ENCODE measurements at regions of chr9 and their contacts with region 1.

Region 1: DNA sequence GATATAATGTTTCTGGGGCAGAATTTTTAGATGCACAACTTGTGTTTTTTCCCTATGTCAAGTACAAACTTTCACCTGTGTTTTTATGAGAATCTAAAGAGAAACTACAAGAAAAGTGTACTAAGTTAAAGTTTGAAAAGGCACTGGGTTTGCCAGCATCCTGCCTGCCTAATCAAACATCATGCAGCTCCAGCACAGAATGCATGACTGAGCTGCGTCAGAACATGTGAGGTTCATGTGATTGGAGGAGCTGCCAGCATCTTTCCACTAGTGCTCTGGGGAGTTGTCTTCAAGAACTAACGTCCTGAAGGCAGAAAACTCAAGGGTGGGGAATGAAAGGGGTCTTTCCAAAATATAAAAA is 46.1 kb upstream of the RIC1 start:
- DNase-seq: peak in 4 of 5 donors; percentile 42 to 63 (median 52)
- H3K4me3 ChIP-seq: no peak overlapping the region
- H3K4me3 Mint-ChIP-seq: peak overlapping the region in 3 of 8 donors; percentile 7 to 48 (median 13)
- H3K27ac ChIP-seq: no peak overlapping the region
- H3K27ac Mint-ChIP-seq: peak overlapping the region; percentile 49 to 92 (median 88)
- H3K4me1 ChIP-seq: peaks cover 35% of the 10 kb centered on the region
- H3K4me1 Mint-ChIP-seq: peaks cover 43 to 64% (median 44%) of the 10 kb centered on the region in 4 donors
- H3K27me3 ChIP-seq: no peaks in the 10 kb centered on the region
- H3K27me3 Mint-ChIP-seq: no peaks in the 10 kb centered on the region

Region 2: DNA sequence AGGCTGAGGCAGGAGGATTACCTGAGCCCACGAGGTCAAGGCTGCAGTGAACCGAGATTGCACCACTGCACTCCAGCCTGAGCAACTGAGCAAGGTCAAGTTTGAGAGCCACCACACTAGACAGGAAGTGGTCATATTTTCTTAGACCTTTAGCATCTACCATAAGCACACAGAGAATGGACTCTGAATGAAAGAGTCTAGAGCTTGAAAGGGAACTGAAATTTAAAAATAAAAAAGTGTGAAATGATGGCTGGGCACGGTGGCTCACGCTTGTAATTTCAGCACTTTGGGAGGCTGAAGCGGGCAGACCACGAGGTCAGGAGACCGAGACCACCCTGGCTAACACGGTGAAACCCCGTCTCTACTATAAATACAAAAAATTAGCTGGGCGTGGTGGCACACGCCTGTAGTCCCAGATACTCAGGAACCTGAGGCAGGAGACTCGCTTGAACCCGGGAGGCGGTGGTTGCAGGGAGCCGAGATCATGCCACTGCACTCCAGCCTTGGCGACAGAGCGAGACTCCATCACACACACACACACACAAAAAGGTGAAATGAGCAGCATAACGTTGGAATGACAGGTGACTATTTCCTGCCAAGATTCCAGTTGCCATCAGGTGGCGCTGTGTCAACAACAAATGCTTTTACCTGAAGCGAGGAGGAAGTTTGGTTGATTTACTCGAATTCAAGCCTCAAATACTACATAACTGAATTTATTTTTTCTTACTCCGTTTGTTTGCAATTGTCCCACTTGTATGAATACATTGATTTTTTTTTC is 820.5 kb before region 1 on chr9:
- CTCF ChIA-PET with region 1: no interaction called
- POLR2A ChIA-PET with region 1: no interaction called
- intact Hi-C with region 1: loop called (anchors 5 kb)
- DNase-seq: peak; percentile 75 to 79 (median 77)
- H3K4me3 ChIP-seq: no peak overlapping the region
- H3K4me3 Mint-ChIP-seq: peak overlapping the region in 6 of 8 donors; percentile 17 to 54 (median 42)
- H3K27ac ChIP-seq: no peak overlapping the region
- H3K27ac Mint-ChIP-seq: peak overlapping the region in 2 of 7 donors; percentile 28 to 71
- H3K4me1 ChIP-seq: peaks cover 11% of the 10 kb centered on the region
- H3K4me1 Mint-ChIP-seq: peaks cover 5 to 12% (median 6%) of the 10 kb centered on the region in 4 donors
- H3K27me3 ChIP-seq: peaks cover 4% of the 10 kb centered on the region
- H3K27me3 Mint-ChIP-seq: peaks cover 0 to 4% of the 10 kb centered on the region in 2 donors

Region 3: DNA sequence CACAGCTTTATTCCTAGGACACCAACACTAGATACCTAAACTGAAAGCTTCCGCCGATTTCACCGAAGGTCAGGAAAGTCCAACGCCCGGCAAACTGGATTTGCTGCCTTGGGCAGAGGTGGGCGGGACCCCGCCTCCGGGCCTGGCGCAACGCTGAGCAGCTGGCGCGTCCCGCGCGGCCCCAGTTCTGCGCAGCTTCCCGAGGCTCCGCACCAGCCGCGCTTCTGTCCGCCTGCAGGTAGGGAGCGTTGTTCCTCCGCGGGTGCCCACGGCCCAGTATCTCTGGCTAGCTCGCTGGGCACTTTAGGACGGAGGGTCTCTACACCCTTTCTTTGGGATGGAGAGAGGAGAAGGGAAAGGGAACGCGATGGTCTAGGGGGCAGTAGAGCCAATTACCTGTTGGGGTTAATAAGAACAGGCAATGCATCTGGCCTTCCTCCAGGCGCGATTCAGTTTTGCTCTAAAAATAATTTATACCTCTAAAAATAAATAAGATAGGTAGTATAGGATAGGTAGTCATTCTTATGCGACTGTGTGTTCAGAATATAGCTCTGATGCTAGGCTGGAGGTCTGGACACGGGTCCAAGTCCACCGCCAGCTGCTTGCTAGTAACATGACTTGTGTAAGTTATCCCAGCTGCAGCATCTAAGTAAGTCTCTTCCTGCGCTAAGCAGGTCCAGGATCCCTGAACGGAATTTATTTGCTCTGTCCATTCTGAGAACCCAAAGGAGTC is 132.3 kb before region 1 on chr9 and contains the start of gene CD274:
- CTCF ChIA-PET with region 1: interaction called, 236 read pairs
- POLR2A ChIA-PET with region 1: interaction called, 178 read pairs
- intact Hi-C with region 1: loop called (anchors 1 kb)
- DNase-seq: peak; percentile 78 to 82 (median 80)
- H3K4me3 ChIP-seq: peak within 1 kb of the TSS; percentile 65 to 67
- H3K4me3 Mint-ChIP-seq: peak within 1 kb of the TSS; percentile 87 to 96 (median 94)
- H3K27ac ChIP-seq: peak within 1 kb of the TSS; percentile 97
- H3K27ac Mint-ChIP-seq: peak within 1 kb of the TSS; percentile 92 to 99 (median 95)
- H3K4me1 ChIP-seq: peaks cover 77% of the 10 kb centered on the region
- H3K4me1 Mint-ChIP-seq: peaks cover 50 to 89% (median 62%) of the 10 kb centered on the region in 4 donors
- H3K27me3 ChIP-seq: no peaks in the 10 kb centered on the region
- H3K27me3 Mint-ChIP-seq: no peaks in the 10 kb centered on the region
- total RNA-seq, gene CD274: 16.2 to 23.0 TPM

Region 4: DNA sequence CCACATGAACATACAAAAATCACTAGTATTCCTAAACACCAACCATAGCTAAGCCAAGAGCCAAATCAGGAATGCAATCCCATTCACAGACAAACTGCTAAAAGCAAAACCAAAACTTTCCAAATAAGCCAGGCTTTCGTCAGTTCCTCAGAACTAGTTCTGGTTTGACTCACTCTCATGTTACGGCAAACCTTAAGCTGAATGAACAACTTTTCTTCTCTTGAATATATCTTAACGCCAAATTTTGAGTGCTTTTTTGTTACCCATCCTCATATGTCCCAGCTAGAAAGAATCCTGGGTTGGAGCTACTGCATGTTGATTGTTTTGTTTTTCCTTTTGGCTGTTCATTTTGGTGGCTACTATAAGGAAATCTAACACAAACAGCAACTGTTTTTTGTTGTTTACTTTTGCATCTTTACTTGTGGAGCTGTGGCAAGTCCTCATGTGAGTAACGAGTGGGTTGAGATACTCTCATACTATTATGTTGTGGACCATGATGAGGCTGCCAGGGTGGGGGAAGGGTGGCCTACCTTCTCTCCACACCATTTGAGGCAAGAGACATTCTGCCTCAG is 72.4 kb before region 1 on chr9 and contains the start of gene PDCD1LG2:
- CTCF ChIA-PET with region 1: interaction called, 5 read pairs
- POLR2A ChIA-PET with region 1: interaction called, 8 read pairs
- intact Hi-C with region 1: loop called (anchors 5 kb)
- DNase-seq: peak in 2 of 5 donors; percentile 9 to 10
- H3K4me3 ChIP-seq: peak within 1 kb of the TSS in 1 of 2 donors; percentile 16
- H3K4me3 Mint-ChIP-seq: peak within 1 kb of the TSS; percentile 82 to 90 (median 86)
- H3K27ac ChIP-seq: peak within 1 kb of the TSS; percentile 47
- H3K27ac Mint-ChIP-seq: peak within 1 kb of the TSS; percentile 80 to 95 (median 94)
- H3K4me1 ChIP-seq: peaks cover 34% of the 10 kb centered on the region
- H3K4me1 Mint-ChIP-seq: peaks cover 37 to 62% (median 46%) of the 10 kb centered on the region in 4 donors
- H3K27me3 ChIP-seq: no peaks in the 10 kb centered on the region
- H3K27me3 Mint-ChIP-seq: no peaks in the 10 kb centered on the region
- total RNA-seq, gene PDCD1LG2: 0.90 to 1.1 TPM

Region 5: GRCh38 chr9:5557606-5558587 is 24.9 kb before region 1 on chr9:
- CTCF ChIA-PET with region 1: interaction called, 7 read pairs
- POLR2A ChIA-PET with region 1: interaction called, 72 read pairs
- intact Hi-C with region 1: loop called (anchors 1 kb)
- DNase-seq: peak; percentile 61 to 79 (median 68)
- H3K4me3 ChIP-seq: peak overlapping the region in 1 of 2 donors; percentile 14
- H3K4me3 Mint-ChIP-seq: peak overlapping the region in 7 of 8 donors; percentile 26 to 85 (median 68)
- H3K27ac ChIP-seq: peak overlapping the region; percentile 56
- H3K27ac Mint-ChIP-seq: peak overlapping the region; percentile 85 to 99 (median 95)
- H3K4me1 ChIP-seq: peaks cover 42% of the 10 kb centered on the region
- H3K4me1 Mint-ChIP-seq: peaks cover 36 to 70% (median 59%) of the 10 kb centered on the region in 4 donors
- H3K27me3 ChIP-seq: no peaks in the 10 kb centered on the region
- H3K27me3 Mint-ChIP-seq: no peaks in the 10 kb centered on the region

Region 6: GRCh38 chr9:5593904-5594303 is 11.1 kb after region 1 on chr9:
- CTCF ChIA-PET with region 1: interaction called, 57 read pairs
- POLR2A ChIA-PET with region 1: no interaction called
- intact Hi-C with region 1: no loop called
- DNase-seq: no peak
- H3K4me3 ChIP-seq: no peak overlapping the region
- H3K4me3 Mint-ChIP-seq: no peak overlapping the region
- H3K27ac ChIP-seq: no peak overlapping the region
- H3K27ac Mint-ChIP-seq: peak overlapping the region in 2 of 7 donors; percentile 3 to 15
- H3K4me1 ChIP-seq: peaks cover 5% of the 10 kb centered on the region
- H3K4me1 Mint-ChIP-seq: peaks cover 7 to 13% (median 8%) of the 10 kb centered on the region in 4 donors
- H3K27me3 ChIP-seq: no peaks in the 10 kb centered on the region
- H3K27me3 Mint-ChIP-seq: no peaks in the 10 kb centered on the region